ENCODE measurements at regions of chr2 and their contacts with region 1.

Region 1: DNA sequence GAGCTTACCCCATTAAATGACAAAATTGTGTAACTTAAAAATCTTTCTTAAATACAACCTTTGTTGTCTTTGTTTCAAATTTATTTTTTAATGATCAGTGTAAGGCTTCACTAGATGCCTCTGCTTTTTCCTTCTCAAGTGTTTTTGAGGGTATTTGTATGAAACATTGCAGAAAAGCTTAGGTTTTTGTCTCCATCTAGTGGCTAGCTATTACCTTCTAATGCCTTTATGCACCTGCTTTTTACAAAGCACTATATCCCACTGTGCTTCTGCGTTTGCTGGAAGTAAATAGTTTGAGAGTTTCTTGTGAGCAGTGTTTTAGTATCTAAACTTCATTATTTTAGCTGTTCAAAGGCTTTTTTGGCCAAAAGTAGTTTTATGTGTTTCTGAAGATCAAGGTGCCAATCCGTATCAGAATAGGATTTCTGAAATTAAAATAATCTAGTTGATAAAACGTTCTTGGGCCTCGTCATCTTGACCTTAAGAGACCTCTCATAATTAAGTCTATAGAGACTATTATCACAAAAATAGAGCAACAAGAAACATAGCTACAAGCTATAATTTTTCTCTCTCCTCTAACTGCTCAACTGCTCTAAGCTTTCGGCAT is 47.0 kb downstream of the IWS1 start:
- DNase-seq: no peak
- H3K4me3 Mint-ChIP-seq: no peak overlapping the region
- H3K27ac Mint-ChIP-seq: no peak overlapping the region
- H3K4me1 Mint-ChIP-seq: no peaks in the 10 kb centered on the region
- H3K27me3 Mint-ChIP-seq: no peaks in the 10 kb centered on the region

Region 2: DNA sequence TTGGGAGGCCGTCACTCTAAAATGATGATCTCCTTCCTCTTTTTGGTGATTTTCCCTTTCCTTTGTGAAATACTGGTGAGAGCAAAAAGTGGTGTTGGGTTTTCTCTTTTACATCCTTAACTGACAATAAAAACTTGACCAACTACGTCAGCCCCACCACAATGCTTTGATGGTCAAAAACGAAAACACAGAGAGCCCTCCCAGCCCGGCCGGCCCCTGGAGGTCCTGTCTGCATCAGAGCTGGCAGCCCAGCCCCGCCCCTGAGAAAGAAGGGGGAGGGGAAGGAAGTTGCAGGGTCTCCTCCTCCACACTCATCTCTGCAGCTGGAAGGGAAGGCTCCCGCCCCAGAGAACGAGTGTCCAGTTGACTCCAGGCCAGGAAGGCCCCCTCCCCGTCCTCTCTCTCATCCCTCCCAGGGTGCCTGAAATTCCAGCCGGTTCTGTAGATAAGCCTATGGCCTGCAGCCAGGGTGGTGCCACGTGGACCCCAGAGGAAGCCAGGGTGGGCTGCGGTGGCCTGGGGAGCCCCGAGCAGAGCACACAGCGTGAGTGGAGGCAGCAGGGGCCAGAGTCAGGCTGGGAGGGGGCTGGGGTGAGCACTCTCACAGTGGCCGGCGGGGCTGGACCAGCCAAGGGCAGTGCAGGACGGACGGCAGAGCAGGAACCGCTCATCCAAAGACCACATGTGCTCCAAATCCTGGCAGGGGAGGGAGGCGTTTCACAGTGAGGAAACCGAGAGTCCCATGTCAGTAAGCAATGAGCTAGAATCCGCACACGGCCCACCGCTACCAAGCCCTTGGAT is 392.1 kb before region 1 on chr2:
- intact Hi-C with region 1: loop called (anchors 10 kb)
- DNase-seq: no peak
- H3K4me3 Mint-ChIP-seq: no peak overlapping the region
- H3K27ac Mint-ChIP-seq: no peak overlapping the region
- H3K4me1 Mint-ChIP-seq: peaks cover 39% of the 10 kb centered on the region
- H3K27me3 Mint-ChIP-seq: peaks cover 2% of the 10 kb centered on the region

Region 3: DNA sequence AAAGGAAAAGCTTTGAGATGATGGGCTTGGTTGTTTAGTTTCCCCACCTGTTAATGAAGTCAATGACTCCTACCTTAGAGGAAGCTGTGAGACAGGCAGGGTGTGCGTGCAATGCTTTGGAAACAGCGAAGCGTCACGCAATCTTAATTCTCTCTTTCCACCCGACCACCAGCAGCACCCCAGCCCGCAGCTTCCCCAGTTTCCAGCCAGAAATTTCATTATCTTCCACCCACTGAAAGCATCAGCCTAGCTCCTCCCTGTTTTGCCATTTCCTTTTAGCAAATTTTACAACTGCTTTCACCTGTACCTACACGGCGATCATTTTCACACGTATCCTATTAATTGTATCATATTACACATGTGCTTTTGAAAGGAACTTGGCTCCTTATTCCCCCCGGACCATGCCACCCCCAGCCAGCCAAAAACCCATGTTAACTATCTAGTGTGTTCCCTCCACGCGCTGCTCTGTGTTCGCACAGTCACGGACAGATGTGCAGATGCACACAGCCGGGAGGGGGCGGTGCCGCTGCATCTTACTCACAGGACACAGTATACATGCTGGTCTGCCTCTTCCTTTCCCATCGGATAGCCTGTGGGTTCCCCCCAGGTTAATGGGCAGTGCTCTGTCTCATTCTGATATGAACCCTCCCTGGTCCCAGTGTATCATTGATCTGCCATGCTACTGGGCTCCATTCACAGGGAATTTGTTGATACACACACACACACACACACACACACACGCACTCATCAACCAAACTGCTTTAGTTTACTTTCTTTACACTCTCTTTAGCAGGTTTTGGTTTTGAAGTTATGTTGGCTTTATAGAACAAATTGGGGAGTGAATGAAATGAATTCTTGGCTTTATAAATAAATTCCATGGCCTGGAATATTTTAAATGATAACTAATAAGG is 281.6 kb before region 1 on chr2:
- intact Hi-C with region 1: loop called (anchors 1 kb)
- DNase-seq: peak; percentile 13
- H3K4me3 Mint-ChIP-seq: peak overlapping the region; percentile 81
- H3K27ac Mint-ChIP-seq: peak overlapping the region; percentile 8
- H3K4me1 Mint-ChIP-seq: peaks cover 7% of the 10 kb centered on the region
- H3K27me3 Mint-ChIP-seq: peaks cover 4% of the 10 kb centered on the region

Region 4: DNA sequence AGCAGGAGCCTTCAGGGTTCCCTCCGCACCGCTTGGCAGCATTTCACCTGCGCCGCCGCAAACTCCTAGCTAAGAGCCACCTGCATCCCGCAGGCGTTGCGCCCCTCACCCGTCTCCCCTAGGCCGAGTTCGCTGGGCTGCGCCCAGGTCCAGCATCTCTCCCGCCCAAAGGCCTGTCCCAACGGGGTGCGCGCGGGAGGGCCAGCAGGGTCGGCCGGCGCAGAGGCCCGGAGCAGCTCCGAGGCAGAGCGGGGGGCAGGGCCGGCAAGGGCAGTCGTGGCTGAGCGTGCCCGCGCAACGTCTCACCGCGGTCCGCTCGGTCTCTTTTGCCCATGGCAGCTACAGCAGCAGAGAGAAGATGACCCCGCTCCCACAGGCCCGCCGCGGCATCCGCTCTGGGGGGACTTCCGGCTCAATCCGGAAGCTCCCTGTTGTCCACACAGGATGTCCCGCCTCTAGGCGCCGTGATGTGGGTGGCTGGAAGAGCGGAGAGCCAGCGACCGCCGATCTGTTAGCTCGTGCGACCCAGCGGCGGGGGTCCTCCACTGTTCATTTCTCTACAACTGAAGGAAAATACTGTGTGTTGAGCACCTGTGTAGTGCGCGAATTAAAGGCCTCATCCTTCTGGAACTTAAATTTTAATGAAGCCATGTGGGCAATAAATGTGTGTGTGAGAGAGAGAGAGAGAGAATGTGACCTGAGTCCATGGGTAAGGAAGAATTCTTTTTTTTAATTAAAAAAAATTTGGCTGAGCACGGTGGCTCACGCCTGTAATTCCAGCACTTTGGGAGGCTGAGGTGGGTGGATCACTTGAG is 185.4 kb before region 1 on chr2 and contains the start of gene ERCC3:
- intact Hi-C with region 1: loop called (anchors 1 kb)
- DNase-seq: peak; percentile 76
- H3K4me3 Mint-ChIP-seq: peak within 1 kb of the TSS; percentile 99
- H3K27ac Mint-ChIP-seq: peak within 1 kb of the TSS; percentile 98
- H3K4me1 Mint-ChIP-seq: peaks cover 23% of the 10 kb centered on the region
- H3K27me3 Mint-ChIP-seq: no peaks in the 10 kb centered on the region
- total RNA-seq, gene ERCC3: 63.1 and 65.5 TPM in 2 replicates

Region 5: DNA sequence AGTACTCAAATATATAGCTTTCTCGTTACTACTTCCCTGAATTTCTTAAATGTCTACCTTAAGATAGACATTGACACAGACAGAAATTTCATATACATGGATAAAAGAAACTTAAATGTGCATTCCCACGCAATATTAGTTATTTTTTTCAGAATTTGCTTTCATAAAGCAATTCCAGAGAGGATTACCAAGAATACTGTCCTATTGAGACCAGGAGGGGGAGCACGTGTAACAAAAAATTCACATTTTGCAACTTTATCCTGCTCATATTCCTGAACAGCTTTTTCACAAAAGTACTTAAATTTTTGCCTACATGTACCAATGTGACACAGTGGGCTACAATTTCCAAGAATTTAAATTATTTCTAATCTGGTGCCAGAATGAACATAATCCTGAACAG is 154.7 kb before region 1 on chr2:
- intact Hi-C with region 1: loop called (anchors 1 kb)
- DNase-seq: no peak
- H3K4me3 Mint-ChIP-seq: no peak overlapping the region
- H3K27ac Mint-ChIP-seq: no peak overlapping the region
- H3K4me1 Mint-ChIP-seq: peaks cover 7% of the 10 kb centered on the region
- H3K27me3 Mint-ChIP-seq: no peaks in the 10 kb centered on the region

Region 6: DNA sequence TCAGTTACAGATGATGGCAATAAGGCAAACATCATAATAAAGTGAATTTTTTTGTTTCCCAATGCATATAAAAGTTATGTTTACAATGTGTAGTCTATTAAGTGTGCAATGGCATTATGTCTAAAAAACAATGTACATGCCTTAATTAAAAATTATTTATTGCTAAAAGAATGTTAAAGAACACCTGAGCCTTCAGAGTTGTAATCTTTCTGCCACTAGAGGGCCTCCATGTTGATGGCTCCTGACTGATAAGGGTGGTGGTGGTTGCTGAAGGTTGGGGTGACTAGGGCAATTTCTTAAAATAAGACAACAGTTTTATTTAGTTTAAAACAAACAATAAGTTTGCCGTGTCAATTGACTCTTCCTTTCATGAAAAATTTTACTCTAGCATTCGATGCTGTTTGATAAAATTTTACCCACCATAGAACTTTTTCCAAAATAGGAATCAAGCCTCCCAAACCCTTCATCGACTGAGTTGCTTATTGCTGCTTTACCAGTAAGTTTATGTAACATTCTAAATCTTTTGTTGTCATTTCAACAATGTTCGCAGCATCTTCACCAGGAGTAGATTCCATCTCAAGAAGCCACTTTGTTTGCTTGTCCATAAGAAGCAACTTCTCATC is 123.8 kb before region 1 on chr2:
- intact Hi-C with region 1: loop called (anchors 1 kb)
- DNase-seq: peak; percentile 22
- H3K4me3 Mint-ChIP-seq: no peak overlapping the region
- H3K27ac Mint-ChIP-seq: no peak overlapping the region
- H3K4me1 Mint-ChIP-seq: peaks cover 21% of the 10 kb centered on the region
- H3K27me3 Mint-ChIP-seq: no peaks in the 10 kb centered on the region

Region 7: DNA sequence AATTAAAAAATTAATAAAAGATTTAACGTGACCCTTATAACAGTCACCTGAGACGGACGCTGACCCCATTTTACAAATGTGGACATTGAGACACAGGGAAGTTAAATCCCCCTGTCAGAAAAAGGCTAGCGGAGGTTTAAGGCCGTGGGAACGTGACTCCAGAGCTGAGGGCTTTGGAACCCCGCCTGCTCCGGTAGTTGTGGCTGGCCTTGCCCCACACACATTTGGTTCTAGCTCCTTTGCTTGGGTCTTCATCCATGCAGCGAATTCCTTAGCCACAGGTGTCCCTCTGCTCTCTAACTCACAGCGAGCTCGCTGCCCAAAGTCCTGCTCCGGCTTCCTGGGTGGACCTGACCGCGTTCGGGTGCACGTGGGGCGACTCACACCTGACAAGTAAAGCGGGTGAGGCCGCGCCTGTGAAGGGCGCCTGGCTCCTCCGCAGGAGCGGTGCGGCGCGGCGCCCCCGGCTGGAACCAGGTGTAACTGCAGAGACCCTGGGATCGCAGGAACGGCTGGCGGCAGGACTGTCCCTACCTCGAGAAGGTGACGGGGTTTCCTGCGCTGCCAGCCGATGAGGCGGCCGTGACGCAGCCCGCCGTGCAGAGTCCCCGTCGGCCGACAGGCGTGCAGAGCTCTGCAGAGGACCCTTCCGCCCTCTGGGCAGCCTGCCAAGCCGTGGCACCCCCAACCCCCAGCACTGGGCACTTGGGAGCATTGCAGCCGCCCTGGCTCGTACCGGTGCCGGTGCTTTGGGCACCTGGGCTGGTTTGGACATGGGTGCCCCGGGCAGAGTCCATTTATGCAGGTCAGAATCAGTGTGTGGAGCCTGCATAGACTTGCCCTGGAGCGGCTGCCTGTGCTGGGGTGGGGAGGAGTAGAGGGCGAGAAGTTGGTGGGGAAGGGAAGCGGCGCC is 63.5 kb before region 1 on chr2:
- intact Hi-C with region 1: loop called (anchors 1 kb)
- DNase-seq: peak; percentile 67
- H3K4me3 Mint-ChIP-seq: peak overlapping the region; percentile 71
- H3K27ac Mint-ChIP-seq: peak overlapping the region; percentile 29
- H3K4me1 Mint-ChIP-seq: peaks cover 51% of the 10 kb centered on the region
- H3K27me3 Mint-ChIP-seq: peaks cover 14% of the 10 kb centered on the region

Region 8: DNA sequence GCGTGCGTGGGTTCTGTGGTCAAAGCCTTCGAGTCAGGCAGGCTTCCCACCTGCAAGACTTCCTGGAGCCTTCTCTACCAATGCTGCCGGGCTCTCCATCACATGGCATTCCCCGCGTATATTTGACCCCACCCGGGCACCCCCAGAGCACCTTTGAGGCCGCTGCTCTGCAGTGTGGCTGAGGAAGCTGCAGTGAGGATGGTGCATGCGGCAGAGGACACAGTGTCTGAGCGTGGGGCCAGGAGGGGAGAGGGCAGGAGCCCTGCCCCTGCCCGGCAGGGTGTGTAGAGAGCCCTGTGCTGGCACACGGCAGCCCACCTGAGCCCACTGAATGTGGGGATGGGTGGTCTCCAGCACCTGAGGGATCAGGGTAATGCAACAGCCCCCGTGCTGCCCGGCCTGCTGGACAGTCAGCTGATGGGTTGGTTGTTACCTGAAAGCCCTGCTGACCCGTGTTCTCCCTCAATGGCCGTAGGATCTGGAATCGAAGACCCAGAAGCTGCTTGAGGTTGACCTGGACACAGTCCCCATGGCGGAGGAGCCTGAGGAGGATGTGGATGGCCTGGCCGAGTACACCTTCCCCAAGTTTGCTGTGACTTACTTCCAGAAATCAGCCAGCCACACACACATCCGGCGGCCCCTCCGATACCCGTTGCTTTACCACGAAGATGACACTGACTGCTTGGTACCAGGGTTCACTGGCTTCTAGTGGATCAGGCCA is 129.9 kb after region 1 on chr2:
- intact Hi-C with region 1: no loop called
- DNase-seq: no peak
- H3K4me3 Mint-ChIP-seq: no peak overlapping the region
- H3K27ac Mint-ChIP-seq: no peak overlapping the region
- H3K4me1 Mint-ChIP-seq: peaks cover 4% of the 10 kb centered on the region
- H3K27me3 Mint-ChIP-seq: peaks cover 2% of the 10 kb centered on the region

Measured in activated T-helper 1 cell treated with anti-CD3 and anti-CD28 coated beads, Interleukin-12 subunit alpha, Interleukin-12 subunit beta, Interleukin-2, Interleukin-4 antibody, amounts not matched to agents 30 ng/mL and 10 ng/mL and 1 ng/mL, durations not matched to agents 14 hours and 24 hours and 36 hours (primary cell).